ENCODE measurements at regions of chr18 and their contacts with region 1.

Region 1: DNA sequence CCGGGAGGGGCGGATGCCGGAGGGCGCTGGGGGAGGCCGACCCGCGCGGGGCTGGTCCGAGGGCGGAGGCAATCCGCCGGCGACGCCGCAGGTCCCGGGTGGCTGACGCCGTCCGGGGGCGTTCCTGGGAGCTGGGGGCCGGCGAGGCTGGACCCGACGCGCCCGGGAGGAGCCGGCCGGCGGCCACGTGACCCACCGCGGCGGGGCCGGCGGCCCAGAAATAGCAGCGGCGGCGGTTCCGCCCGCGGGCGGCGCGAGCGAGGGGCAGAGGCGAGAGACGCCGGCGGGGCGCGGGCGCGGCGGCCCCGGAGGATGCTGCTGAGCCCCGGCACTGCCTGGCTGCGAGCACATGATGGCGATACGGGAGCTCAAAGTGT is at the start of gene RAB31:
- H3K4me3 Mint-ChIP-seq: peak within 1 kb of the TSS; percentile 96
- H3K27ac Mint-ChIP-seq: peak within 1 kb of the TSS; percentile 85
- H3K4me1 Mint-ChIP-seq: peaks cover 71% of the 10 kb centered on the region
- H3K27me3 Mint-ChIP-seq: no peaks in the 10 kb centered on the region

Region 2: DNA sequence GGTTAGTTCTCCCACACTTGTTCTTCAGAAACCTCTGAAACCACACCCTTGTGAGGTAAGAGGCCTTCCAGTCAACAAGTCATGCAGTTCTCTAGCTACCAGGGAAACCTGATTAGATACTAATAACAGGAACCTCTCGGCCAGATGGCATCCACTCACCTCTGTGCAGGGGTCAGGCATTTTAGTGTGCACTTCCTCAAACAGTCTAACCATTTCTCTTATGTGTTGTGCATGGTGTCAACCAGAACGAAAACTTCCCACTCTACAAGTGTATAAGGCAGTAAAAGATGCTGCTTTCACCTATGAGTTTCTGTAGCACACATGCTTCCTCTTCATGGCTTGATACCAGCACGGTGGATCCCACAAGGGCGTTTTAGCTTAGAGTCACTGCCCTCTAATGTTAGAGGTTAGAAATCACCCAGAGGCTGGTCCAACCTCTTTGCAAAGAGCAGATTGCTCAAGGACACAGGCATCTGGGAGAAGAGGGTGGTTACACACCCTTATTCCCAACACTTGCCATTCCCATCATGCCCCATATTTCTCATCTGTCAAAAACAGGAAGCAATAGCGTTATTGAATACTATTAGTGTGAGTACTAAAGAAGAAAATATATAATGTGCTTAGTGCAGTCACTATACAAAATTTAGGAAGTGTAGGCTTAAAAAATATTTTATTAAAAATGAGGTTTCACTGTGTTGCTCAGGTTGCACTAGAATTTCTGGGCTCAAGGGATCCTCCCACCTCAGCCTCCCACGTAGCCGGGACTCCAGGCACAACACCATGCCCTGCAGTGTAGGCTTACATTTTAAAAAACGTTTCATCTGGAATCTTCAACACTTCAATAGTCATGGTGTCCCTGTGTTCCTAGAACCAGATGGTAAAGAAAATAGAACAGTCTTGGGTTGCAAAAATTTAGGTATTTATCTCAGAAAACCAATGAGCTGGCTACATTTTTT is 34.5 kb before region 1 on chr18:
- intact Hi-C with region 1: no loop called
- H3K4me3 Mint-ChIP-seq: no peak overlapping the region
- H3K27ac Mint-ChIP-seq: peak overlapping the region; percentile 60
- H3K4me1 Mint-ChIP-seq: peaks cover 7% of the 10 kb centered on the region
- H3K27me3 Mint-ChIP-seq: peaks cover 1% of the 10 kb centered on the region

Region 3: GRCh38 chr18:9743200-9744016 is 35.4 kb after region 1 on chr18:
- intact Hi-C with region 1: no loop called
- H3K4me3 Mint-ChIP-seq: no peak overlapping the region
- H3K27ac Mint-ChIP-seq: peak overlapping the region; percentile 76
- H3K4me1 Mint-ChIP-seq: peaks cover 83% of the 10 kb centered on the region
- H3K27me3 Mint-ChIP-seq: no peaks in the 10 kb centered on the region

Region 4: GRCh38 chr18:9771261-9771976 is 63.4 kb after region 1 on chr18:
- intact Hi-C with region 1: loop called (anchors 1 kb)
- H3K4me3 Mint-ChIP-seq: peak overlapping the region; percentile 65
- H3K27ac Mint-ChIP-seq: peak overlapping the region; percentile 93
- H3K4me1 Mint-ChIP-seq: peaks cover 99% of the 10 kb centered on the region
- H3K27me3 Mint-ChIP-seq: no peaks in the 10 kb centered on the region

Region 5: DNA sequence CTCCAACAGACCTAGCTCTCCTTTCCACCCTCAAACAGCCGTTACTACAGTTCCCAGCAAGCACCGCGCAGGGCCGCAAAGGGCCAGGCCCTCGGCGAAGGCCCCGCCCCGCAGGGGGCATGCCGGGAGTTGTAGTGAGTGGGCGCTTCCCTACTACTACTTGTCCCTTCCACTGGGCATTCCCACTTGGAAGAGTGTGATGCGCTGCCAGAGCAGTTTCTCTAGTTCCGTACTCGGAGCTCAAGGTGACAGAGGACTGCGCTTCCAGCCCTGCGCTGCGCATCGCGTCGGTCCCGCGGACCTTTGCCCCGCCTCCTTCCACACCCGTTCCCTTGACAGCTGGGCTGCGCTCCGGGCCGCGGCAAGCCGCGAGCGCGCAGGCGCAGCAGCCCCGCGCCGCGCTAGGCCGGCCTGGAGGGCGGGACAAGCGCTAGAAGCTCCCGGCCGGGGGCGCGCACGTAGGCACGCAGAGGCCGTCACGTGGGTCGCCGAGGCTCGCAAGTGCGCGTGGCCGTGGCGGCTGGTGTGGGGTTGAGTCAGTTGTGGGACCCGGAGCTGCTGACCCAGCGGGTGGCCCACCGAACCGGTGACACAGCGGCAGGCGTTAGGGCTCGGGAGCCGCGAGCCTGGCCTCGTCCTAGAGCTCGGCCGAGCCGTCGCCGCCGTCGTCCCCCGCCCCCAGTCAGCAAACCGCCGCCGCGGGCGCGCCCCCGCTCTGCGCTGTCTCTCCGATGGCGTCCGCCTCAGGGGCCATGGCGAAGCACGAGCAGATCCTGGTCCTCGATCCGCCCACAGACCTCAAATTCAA is 205.7 kb after region 1 on chr18 and contains the start of gene VAPA:
- intact Hi-C with region 1: loop called (anchors 5 kb)
- H3K4me3 Mint-ChIP-seq: peak within 1 kb of the TSS; percentile 91
- H3K27ac Mint-ChIP-seq: peak within 1 kb of the TSS; percentile 95
- H3K4me1 Mint-ChIP-seq: peaks cover 43% of the 10 kb centered on the region
- H3K27me3 Mint-ChIP-seq: no peaks in the 10 kb centered on the region

Region 6: GRCh38 chr18:10525371-10526210 is 817.5 kb after region 1 on chr18 and contains the start of gene NAPG:
- intact Hi-C with region 1: loop called (anchors 10 kb)
- H3K4me3 Mint-ChIP-seq: peak within 1 kb of the TSS; percentile 95
- H3K27ac Mint-ChIP-seq: peak within 1 kb of the TSS; percentile 94
- H3K4me1 Mint-ChIP-seq: peaks cover 44% of the 10 kb centered on the region
- H3K27me3 Mint-ChIP-seq: peaks cover 2% of the 10 kb centered on the region